ENCODE measurements at regions of chr3 and their contacts with region 1.

Region 1: GRCh38 chr3:183122257-183122932 is 23.1 kb upstream of the MCCC1 start:
- DNase-seq: no peak
- H3K4me3 Mint-ChIP-seq: no peak overlapping the region
- H3K27ac Mint-ChIP-seq: no peak overlapping the region
- H3K4me1 Mint-ChIP-seq: peaks cover 8% of the 10 kb centered on the region
- H3K27me3 Mint-ChIP-seq: peaks cover 3% of the 10 kb centered on the region

Region 2: GRCh38 chr3:183158551-183159006 is 36.2 kb after region 1 on chr3:
- intact Hi-C with region 1: loop called (anchors 5 kb)
- DNase-seq: no peak
- H3K4me3 Mint-ChIP-seq: no peak overlapping the region
- H3K27ac Mint-ChIP-seq: peak overlapping the region; percentile 76
- H3K4me1 Mint-ChIP-seq: peaks cover 32% of the 10 kb centered on the region
- H3K27me3 Mint-ChIP-seq: no peaks in the 10 kb centered on the region

Region 3: GRCh38 chr3:183188895-183189462 is 66.6 kb after region 1 on chr3:
- intact Hi-C with region 1: loop called (anchors 1 kb)
- DNase-seq: no peak
- H3K4me3 Mint-ChIP-seq: no peak overlapping the region
- H3K27ac Mint-ChIP-seq: no peak overlapping the region
- H3K4me1 Mint-ChIP-seq: peaks cover 16% of the 10 kb centered on the region
- H3K27me3 Mint-ChIP-seq: no peaks in the 10 kb centered on the region

Region 4: GRCh38 chr3:183377307-183377959 is 255.0 kb after region 1 on chr3:
- intact Hi-C with region 1: loop called (anchors 1 kb)
- DNase-seq: no peak
- H3K4me3 Mint-ChIP-seq: no peak overlapping the region
- H3K27ac Mint-ChIP-seq: peak overlapping the region; percentile 25
- H3K4me1 Mint-ChIP-seq: peaks cover 38% of the 10 kb centered on the region
- H3K27me3 Mint-ChIP-seq: no peaks in the 10 kb centered on the region

Region 5: GRCh38 chr3:183385698-183386613 is 263.6 kb after region 1 on chr3:
- intact Hi-C with region 1: loop called (anchors 1 kb)
- DNase-seq: peak; percentile 33
- H3K4me3 Mint-ChIP-seq: no peak overlapping the region
- H3K27ac Mint-ChIP-seq: no peak overlapping the region
- H3K4me1 Mint-ChIP-seq: peaks cover 21% of the 10 kb centered on the region
- H3K27me3 Mint-ChIP-seq: no peaks in the 10 kb centered on the region

Measured in activated T-helper 2 cell treated with anti-CD3 and anti-CD28 coated beads, Interferon-gamma antibody, Interleukin-2, Interleukin-4, amounts not matched to agents 10 μg/mL and 5 μg/mL and 100 μg/mL, durations not matched to agents 14 hours and 24 hours and 36 hours (primary cell).